Activated CD8-positive, alpha-beta T cell treated with anti-CD3 and anti-CD28 coated beads, Interleukin-2, amount 10 ng/mL, durations not matched to agents 7 days and 5 days (primary cell): ENCODE measurements at regions of chr12 and their contacts with region 1.

Region 1: DNA sequence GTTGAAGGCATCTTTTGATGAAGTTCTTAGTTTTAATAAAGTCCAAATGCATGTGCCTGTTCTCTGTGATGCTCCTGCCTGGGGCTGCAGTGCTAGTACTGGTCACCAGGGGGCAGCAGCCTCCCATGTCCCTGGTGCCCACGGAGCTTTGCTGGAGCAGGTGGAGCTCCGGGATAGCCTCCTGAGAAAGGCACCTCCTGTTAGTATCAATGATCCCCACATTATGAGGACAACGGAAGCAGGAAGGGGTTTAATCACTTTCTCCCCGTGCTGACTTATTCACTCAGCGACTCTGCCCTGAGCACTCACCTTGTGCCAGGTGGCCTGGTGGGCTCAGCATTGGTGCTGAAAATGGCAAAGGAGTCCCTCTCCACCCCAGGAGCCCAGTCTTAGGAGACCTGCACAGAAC is 123.0 kb upstream of the PZP start:
- DNase-seq: peak; percentile 77
- ATAC-seq: peak; percentile 67
- H3K4me3 Mint-ChIP-seq: no peak overlapping the region
- H3K27ac Mint-ChIP-seq: no peak overlapping the region
- H3K4me1 Mint-ChIP-seq: peaks cover 22% of the 10 kb centered on the region
- H3K27me3 Mint-ChIP-seq: no peaks in the 10 kb centered on the region

Region 2: DNA sequence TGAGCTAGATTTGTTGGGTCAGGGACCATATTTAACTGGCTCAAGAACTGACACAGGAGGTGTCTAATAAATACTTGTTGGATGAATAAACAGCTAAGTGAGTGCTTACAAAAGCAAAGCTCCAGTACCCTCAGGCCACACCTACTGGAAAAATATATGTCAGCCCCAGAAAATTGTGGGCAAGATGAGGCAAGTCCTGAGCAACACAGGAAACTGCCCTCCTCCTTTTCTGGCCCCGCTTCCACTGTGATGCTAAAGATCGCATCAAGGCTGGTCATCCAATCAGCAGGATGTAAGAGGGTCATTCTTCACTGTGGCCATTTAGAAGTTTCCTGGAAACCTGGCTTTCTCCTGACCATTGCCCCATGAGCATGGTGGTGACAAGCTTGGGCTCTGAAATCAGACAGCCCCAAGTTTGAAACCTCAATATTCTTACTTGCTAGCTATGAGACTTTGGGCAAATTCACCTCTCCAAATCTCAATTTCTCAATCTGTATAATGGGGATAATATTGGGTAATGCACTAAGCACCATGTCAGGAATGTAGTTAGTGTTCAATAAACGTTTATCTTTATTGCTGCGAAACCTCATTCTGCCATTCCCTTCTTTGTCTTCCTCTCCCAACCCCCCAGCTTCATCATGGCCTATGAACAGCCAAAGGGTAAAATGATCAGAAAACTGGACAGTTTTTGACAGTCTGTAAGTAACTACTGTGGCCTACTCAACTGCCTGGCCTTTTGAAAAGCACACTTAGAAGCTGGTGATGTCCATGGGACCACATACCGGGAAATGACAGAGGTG is 16.3 kb after region 1 on chr12:
- CTCF ChIA-PET with region 1: interaction called, 31 read pairs
- POLR2A ChIA-PET with region 1: no interaction called
- DNase-seq: no peak
- ATAC-seq: peak; percentile 47
- H3K4me3 Mint-ChIP-seq: no peak overlapping the region
- H3K27ac Mint-ChIP-seq: no peak overlapping the region
- H3K4me1 Mint-ChIP-seq: peaks cover 39% of the 10 kb centered on the region
- H3K27me3 Mint-ChIP-seq: no peaks in the 10 kb centered on the region

Region 3: DNA sequence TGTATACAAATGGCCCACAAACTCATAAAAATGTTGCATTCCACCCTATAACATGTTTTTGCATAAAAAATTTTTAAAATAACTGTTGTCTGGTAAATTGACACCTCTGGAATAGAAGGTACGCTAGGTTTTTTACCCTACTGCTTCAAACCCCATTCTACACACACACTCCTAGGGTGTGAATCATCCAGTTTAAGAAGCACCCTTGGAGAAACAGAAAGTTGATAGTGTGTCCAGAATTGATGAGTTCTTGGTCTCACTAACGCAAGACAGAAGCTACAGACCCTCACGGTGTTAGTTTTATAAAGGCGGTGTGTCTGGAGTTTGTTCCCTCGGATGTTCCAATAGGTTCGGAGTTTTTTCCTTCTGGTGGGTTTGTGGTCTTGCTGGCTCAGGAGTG is 118.0 kb after region 1 on chr12:
- CTCF ChIA-PET with region 1: interaction called, 15 read pairs
- POLR2A ChIA-PET with region 1: no interaction called
- DNase-seq: no peak
- ATAC-seq: no peak
- H3K4me3 Mint-ChIP-seq: peak overlapping the region; percentile 96
- H3K27ac Mint-ChIP-seq: peak overlapping the region; percentile 96
- H3K4me1 Mint-ChIP-seq: peaks cover 23% of the 10 kb centered on the region
- H3K27me3 Mint-ChIP-seq: no peaks in the 10 kb centered on the region

Region 4: DNA sequence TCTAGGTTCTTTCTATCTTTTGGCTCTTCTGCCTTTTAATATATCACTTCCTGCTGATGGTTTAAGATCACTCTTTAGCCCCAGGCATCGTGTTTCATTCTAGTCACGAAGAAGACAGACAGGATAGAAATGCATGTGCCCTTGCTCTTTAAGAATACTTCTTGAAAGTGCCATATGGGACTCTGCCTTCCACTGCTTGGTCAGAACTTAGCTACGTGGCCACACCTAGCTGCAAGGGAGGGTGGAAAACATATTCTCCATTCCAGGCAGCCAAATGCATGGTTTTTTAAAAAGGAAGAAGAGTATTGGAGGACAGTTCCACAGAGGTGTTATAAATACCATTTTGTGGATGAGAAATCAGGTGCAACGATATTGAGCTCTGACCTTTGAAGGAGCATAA is 133.2 kb after region 1 on chr12:
- CTCF ChIA-PET with region 1: interaction called, 17 read pairs
- POLR2A ChIA-PET with region 1: no interaction called
- DNase-seq: no peak
- ATAC-seq: no peak
- H3K4me3 Mint-ChIP-seq: no peak overlapping the region
- H3K27ac Mint-ChIP-seq: no peak overlapping the region
- H3K4me1 Mint-ChIP-seq: peaks cover 13% of the 10 kb centered on the region
- H3K27me3 Mint-ChIP-seq: no peaks in the 10 kb centered on the region